Heart left ventricle (tissue), 16 donors: ENCODE measurements at regions of chr5 and their contacts with region 1.

Region 1: GRCh38 chr5:59810041-59810440 is 83.5 kb downstream of the PDE4D start:
- DNase-seq: peak; percentile 55 to 71 (median 64)
- ATAC-seq: peak in 3 of 4 donors; percentile 52 to 63 (median 60)
- H3K4me3 ChIP-seq: peak overlapping the region in 1 of 12 donors; percentile 12
- H3K27ac ChIP-seq: no peak overlapping the region
- H3K4me1 ChIP-seq: peaks cover 0 to 6% (median 0%) of the 10 kb centered on the region in 12 donors
- H3K27me3 ChIP-seq: peaks cover 0 to 17% (median 6%) of the 10 kb centered on the region in 9 donors
- CTCF ChIP-seq: peak; percentile 87 to 96 (median 92)
- POLR2A ChIP-seq: no peak

Region 2: GRCh38 chr5:59390074-59390659 is 419.9 kb before region 1 on chr5:
- intact Hi-C with region 1: loop called in 1 of 10 experiments (anchors 5 kb)
- DNase-seq: peak in 1 of 5 donors; percentile 8
- ATAC-seq: no peak
- H3K4me3 ChIP-seq: no peak overlapping the region
- H3K27ac ChIP-seq: no peak overlapping the region
- H3K4me1 ChIP-seq: no peaks in the 10 kb centered on the region
- H3K27me3 ChIP-seq: no peaks in the 10 kb centered on the region
- CTCF ChIP-seq: peak; percentile 58 to 88 (median 74)
- POLR2A ChIP-seq: no peak

Region 3: DNA sequence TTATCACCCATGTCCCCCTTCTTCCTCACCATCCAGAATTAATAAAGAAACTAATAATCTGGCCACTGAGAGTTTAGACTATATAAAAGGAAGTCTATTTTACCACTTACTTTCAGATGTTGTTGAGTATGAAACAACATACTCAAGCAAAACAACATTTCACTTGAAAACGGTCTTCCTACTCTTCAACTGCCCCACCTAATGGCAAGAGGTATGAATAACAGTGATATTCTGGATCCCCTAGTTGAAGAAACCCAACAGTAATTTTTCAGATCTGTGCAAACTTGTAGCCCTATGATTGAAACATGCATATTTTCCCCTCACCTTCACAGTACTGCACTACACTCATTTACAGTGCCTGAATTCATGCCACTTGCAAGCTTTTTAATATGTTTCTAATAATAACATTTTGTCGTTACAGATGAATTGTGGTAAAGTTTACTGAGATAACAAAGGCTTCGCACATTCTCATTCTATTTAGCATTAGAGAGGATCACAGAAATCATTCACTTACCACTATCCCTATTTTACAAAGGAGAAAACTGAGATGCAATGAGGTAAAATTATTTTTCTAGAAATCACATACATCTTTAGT is 351.4 kb after region 1 on chr5:
- intact Hi-C with region 1: loop called in 4 of 10 experiments (anchors 5 to 10 kb)
- DNase-seq: no peak
- ATAC-seq: no peak
- H3K4me3 ChIP-seq: no peak overlapping the region
- H3K27ac ChIP-seq: no peak overlapping the region
- H3K4me1 ChIP-seq: no peaks in the 10 kb centered on the region
- H3K27me3 ChIP-seq: no peaks in the 10 kb centered on the region
- CTCF ChIP-seq: peak in 7 of 12 donors; percentile 12 to 51 (median 30)
- POLR2A ChIP-seq: no peak

Region 4: DNA sequence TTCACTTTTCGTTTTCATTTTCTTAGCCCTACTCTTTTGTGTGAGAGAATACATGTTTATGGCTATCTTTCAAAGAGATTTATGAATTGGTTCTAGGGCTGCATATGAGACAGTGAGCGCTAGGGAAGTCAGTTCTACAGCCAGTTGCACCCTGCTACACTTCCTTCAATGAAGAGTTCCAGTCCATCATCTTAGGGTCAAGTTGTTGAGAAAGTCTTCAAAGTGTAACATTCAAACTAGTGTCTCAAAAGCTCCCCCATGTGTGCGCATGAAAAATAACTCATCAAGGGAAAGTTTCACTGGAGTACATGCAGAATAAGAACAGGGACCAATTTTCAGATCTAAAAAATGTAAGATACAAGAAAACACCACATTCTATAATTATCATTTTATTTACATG is 572.7 kb after region 1 on chr5:
- intact Hi-C with region 1: loop called in 4 of 10 experiments (anchors 5 to 10 kb)
- DNase-seq: no peak
- ATAC-seq: no peak
- H3K4me3 ChIP-seq: no peak overlapping the region
- H3K27ac ChIP-seq: no peak overlapping the region
- H3K4me1 ChIP-seq: no peaks in the 10 kb centered on the region
- H3K27me3 ChIP-seq: no peaks in the 10 kb centered on the region
- CTCF ChIP-seq: peak in 5 of 12 donors; percentile 12 to 43 (median 29)
- POLR2A ChIP-seq: no peak

Region 5: GRCh38 chr5:60649283-60649917 is 839.4 kb after region 1 on chr5:
- intact Hi-C with region 1: loop called in 4 of 10 experiments (anchors 5 to 10 kb)
- DNase-seq: no peak
- ATAC-seq: no peak
- H3K4me3 ChIP-seq: no peak overlapping the region
- H3K27ac ChIP-seq: no peak overlapping the region
- H3K4me1 ChIP-seq: no peaks in the 10 kb centered on the region
- H3K27me3 ChIP-seq: no peaks in the 10 kb centered on the region
- CTCF ChIP-seq: peak; percentile 26 to 60 (median 39)
- POLR2A ChIP-seq: no peak

Region 6: DNA sequence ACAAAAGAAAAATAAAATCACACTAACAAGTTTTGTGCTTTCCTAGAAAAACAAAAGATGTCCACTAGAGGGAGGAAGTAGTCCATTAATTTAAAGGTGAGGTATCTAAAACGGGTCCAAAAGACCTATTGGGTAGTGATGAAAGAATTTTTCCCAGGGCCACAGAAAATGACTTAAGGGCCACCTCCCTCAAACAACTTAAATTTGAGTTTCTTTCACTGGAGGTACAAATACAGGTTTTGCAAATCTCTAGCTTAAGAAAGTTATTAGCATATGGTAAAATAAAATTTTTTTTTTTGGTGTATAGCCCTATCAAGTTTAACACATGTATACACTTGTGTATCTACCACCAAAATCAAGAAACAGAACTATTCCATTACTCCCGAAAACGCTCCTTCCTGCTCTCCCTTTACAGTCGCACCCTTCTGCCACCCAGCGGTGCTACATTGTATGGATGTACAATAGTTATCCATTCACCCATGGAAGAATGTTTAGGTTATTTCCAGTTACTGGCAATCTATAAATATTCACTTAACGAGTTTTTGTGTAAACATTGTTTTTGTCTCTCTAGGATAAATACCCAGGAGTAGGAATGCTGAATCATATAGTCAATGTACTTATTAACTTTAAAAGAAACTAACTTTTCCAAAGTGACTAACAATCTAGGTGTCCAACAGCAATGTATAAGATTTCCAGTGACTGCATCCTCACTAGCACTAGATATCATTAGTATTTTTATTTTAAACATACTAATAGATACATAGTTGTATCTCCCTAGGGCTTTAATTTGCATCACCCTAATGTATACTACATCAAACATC is 868.0 kb after region 1 on chr5:
- intact Hi-C with region 1: loop called in 3 of 10 experiments (anchors 5 to 10 kb)
- DNase-seq: no peak
- ATAC-seq: no peak
- H3K4me3 ChIP-seq: no peak overlapping the region
- H3K27ac ChIP-seq: no peak overlapping the region
- H3K4me1 ChIP-seq: peaks cover 0 to 5% (median 0%) of the 10 kb centered on the region in 12 donors
- H3K27me3 ChIP-seq: no peaks in the 10 kb centered on the region
- CTCF ChIP-seq: peak in 11 of 12 donors; percentile 20 to 55 (median 46)
- POLR2A ChIP-seq: no peak